WTC11 (cell line): ENCODE measurements at regions of chr17 and their contacts with region 1.

Region 1: DNA sequence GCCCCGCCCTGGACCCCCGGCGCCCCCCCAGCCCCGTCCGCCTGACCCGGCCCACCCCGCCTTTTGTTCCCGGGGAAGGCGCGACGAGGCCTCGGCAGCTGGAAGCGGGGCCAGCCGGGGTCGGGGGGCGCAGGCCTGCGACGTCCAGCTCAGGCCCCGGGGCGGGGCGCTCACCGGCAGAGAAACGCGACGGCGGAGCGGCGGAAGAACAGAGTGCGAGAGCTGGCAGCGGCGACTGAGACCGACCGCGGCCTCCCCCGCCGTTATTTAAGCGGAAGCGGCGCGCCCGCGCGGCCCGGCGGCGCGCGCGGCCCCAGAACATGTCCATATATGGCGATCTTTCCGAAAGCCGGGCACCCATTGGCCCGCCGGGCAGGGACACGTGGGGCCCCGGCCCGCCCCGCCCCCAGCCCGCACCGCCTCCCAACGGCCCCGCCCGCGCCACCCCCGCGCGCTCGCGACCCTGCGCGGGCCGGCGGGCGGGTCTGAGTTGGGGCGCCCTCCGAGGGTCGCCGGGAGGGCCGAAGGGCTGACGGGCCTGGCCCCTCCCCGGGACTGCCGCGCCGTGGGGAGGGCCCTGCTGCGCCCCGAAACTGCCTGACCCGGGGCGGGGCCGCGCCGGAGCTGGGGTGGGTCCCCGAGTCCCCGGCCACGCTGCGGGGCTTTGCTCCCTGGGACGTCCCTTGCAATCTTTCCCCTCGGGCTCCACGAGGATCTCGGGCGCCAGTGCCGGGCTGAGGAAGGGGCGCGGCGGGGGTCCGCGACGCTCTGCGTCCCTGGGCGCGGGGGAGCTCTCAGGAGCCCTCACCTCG is at the start of gene ACTG1:
- DNase-seq: peak; percentile 88
- ATAC-seq: peak; percentile 6
- H3K4me3 Mint-ChIP-seq: peak within 1 kb of the TSS; percentile 99
- H3K27ac Mint-ChIP-seq: peak within 1 kb of the TSS; percentile 94
- H3K4me1 Mint-ChIP-seq: peaks cover 41% of the 10 kb centered on the region
- H3K27me3 Mint-ChIP-seq: peaks cover 10% of the 10 kb centered on the region; the same call in 1 of the 2 replicates
- CTCF ChIP-seq: no peak
- total RNA-seq, gene ACTG1: 3,338 to 3,455 TPM (median 3,348 TPM) in 3 replicates

Region 2: DNA sequence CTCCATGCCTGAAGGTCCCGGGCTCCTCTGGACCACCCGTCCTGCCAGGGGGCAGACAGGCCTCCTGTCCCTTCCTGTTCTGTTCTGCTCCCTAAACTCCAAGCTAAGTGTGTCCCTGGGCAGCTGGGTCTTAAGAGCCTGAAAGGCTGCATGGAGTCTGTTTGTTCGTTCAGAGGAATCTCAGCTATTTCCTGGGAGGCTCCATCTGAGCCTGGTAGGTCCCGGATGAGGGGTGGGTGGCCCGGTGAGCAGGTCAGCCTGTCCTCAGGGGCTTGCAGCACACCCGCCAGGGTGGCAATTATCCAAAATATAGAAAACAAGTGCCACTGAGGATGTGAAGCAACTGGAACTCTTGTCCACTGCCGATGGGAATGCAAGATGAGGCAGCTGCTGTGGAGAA is 12.7 kb before region 1 on chr17:
- CTCF ChIA-PET with region 1: interaction called, 5 read pairs
- POLR2A ChIA-PET with region 1: interaction called, 12 read pairs
- DNase-seq: no peak
- ATAC-seq: peak; percentile 59
- H3K4me3 Mint-ChIP-seq: no peak overlapping the region
- H3K27ac Mint-ChIP-seq: no peak overlapping the region
- H3K4me1 Mint-ChIP-seq: peaks cover 6% of the 10 kb centered on the region; the same call in 1 of the 2 replicates
- H3K27me3 Mint-ChIP-seq: peaks cover 38% of the 10 kb centered on the region
- CTCF ChIP-seq: no peak